ENCODE measurements at regions of chr4 and their contacts with region 1.

Region 1: DNA sequence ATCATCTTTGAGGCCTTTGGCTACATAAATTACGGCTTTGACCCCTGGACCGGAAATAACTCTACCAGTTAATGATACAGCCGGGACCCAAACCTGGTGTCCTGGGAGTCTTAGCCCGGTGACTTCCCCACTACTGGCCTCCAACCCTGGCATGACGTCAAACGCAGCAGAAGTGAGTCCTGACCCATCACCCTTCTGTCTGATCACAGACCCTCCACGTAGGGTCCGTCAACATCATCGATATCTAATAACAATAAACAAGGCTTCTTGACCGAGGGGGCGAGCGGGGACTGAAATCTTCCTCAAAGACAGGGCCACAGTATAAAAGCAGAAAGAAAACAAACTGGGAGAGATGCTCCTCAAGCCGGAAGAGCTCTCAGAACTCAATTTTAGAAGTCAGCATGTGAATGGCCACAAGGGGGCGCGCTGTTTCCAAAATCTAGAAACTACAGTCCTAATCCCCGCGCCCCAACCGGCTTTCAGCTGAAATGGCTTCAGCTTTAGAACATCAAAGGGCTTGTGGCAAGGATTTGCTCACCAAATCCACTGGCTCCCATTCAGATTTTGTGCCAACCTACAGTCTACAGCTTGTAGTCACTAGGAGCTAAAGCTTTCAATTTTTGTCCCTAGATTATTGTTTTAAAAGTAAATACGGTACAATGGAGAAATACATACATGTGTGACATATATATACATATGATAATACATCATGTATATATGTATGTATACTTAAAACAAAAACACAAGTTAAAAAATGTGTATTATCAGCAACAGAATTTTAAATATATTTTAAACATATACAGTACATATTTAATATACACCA is 46.4 kb upstream of the ENPP6 start:
- DNase-seq: peak; percentile 86
- H3K4me3 Mint-ChIP-seq: peak overlapping the region; percentile 1
- H3K27ac Mint-ChIP-seq: peak overlapping the region; percentile 60
- H3K4me1 Mint-ChIP-seq: peaks cover 59% of the 10 kb centered on the region
- H3K27me3 Mint-ChIP-seq: peaks cover 2% of the 10 kb centered on the region

Region 2: GRCh38 chr4:183747931-183748670 is 516.0 kb before region 1 on chr4:
- intact Hi-C with region 1: no loop called
- DNase-seq: no peak
- H3K4me3 Mint-ChIP-seq: no peak overlapping the region
- H3K27ac Mint-ChIP-seq: no peak overlapping the region
- H3K4me1 Mint-ChIP-seq: no peaks in the 10 kb centered on the region
- H3K27me3 Mint-ChIP-seq: peaks cover 6% of the 10 kb centered on the region

Region 3: GRCh38 chr4:184142121-184143000 is 121.8 kb before region 1 on chr4:
- intact Hi-C with region 1: no loop called
- DNase-seq: no peak
- H3K4me3 Mint-ChIP-seq: no peak overlapping the region
- H3K27ac Mint-ChIP-seq: no peak overlapping the region
- H3K4me1 Mint-ChIP-seq: no peaks in the 10 kb centered on the region
- H3K27me3 Mint-ChIP-seq: peaks cover 5% of the 10 kb centered on the region

Region 4: GRCh38 chr4:184282251-184282713 is 18.2 kb after region 1 on chr4:
- intact Hi-C with region 1: loop called (anchors 1 kb)
- DNase-seq: peak; percentile 53
- H3K4me3 Mint-ChIP-seq: peak overlapping the region; percentile 50
- H3K27ac Mint-ChIP-seq: peak overlapping the region; percentile 87
- H3K4me1 Mint-ChIP-seq: peaks cover 75% of the 10 kb centered on the region
- H3K27me3 Mint-ChIP-seq: no peaks in the 10 kb centered on the region

Region 5: GRCh38 chr4:184318852-184319251 is 54.7 kb after region 1 on chr4:
- intact Hi-C with region 1: loop called (anchors 1 kb)
- DNase-seq: no peak
- H3K4me3 Mint-ChIP-seq: peak overlapping the region; percentile 23
- H3K27ac Mint-ChIP-seq: peak overlapping the region; percentile 89
- H3K4me1 Mint-ChIP-seq: peaks cover 71% of the 10 kb centered on the region
- H3K27me3 Mint-ChIP-seq: no peaks in the 10 kb centered on the region

Region 6: DNA sequence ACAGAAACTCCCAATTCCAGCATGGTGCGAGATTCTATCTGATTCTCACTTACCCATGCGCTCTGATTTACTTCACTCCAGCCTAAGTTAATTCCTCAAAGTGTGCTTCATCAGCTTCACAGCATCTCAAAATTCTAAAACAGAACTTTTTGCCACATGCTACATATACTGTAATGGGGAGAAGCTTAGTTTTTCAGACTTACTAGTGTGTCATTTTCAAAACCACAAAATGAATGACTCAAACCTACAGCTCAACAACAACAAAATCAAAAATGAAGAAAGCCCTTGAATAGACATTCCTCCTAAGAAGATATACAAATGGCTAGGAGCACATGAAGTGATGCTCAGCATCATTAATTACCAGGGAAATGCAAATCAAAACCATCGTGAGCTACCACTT is 195.3 kb after region 1 on chr4:
- intact Hi-C with region 1: loop called (anchors 1 kb)
- DNase-seq: no peak
- H3K4me3 Mint-ChIP-seq: peak overlapping the region; percentile 35
- H3K27ac Mint-ChIP-seq: peak overlapping the region; percentile 83
- H3K4me1 Mint-ChIP-seq: peaks cover 82% of the 10 kb centered on the region
- H3K27me3 Mint-ChIP-seq: no peaks in the 10 kb centered on the region

Region 7: GRCh38 chr4:184538023-184538599 is 274.0 kb after region 1 on chr4:
- intact Hi-C with region 1: loop called (anchors 1 kb)
- DNase-seq: peak; percentile 55
- H3K4me3 Mint-ChIP-seq: peak overlapping the region; percentile 91
- H3K27ac Mint-ChIP-seq: peak overlapping the region; percentile 94
- H3K4me1 Mint-ChIP-seq: peaks cover 64% of the 10 kb centered on the region
- H3K27me3 Mint-ChIP-seq: no peaks in the 10 kb centered on the region

Region 8: DNA sequence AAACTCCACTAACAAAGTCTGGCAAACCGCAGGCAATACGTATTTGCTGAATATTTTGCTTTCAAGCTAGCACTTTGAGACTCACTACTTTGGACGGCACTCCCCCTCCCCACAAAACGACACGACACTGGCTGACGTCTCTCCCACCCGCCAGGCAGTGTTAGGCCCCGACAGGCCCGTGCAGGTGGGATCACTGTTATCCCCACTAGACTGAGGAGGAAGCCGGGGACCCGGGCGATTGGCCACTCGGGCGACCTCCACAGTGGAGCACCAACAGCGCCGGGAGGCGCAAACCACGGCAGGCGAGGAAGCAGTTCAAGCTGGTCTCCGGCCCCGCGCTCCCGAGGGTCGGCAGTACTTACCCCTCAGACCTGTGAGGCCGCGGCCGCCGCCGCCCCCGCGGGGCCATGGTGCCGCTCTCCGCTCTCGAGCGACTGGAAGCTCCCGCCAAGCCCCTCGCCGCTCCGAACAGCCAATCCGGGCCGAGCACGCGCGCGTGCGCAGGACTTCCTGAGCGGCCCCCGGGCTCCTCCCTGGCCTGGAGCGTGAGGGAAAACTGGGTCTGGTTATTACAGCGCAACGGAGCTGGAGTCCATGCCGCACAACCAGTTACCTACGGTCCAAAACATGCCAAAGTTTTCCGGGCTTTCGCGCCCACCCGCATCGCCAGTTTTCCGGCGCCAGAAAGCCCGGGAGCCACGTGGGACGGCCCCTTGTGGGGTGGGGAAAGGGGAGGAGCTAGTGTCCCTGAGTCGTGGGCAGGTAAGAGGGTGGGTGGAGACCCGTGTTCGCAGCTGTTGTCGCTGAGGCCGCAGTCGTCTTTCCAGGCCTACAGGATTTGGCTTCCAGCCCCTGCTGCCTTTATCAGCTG is 469.8 kb after region 1 on chr4 and contains the start of gene CENPU:
- intact Hi-C with region 1: loop called (anchors 1 kb)
- DNase-seq: peak; percentile 96
- H3K4me3 Mint-ChIP-seq: peak within 1 kb of the TSS; percentile 94
- H3K27ac Mint-ChIP-seq: peak within 1 kb of the TSS; percentile 95
- H3K4me1 Mint-ChIP-seq: peaks cover 50% of the 10 kb centered on the region
- H3K27me3 Mint-ChIP-seq: no peaks in the 10 kb centered on the region
- total RNA-seq, gene CENPU: 78.3 and 80.3 TPM in 2 replicates

Region 9: DNA sequence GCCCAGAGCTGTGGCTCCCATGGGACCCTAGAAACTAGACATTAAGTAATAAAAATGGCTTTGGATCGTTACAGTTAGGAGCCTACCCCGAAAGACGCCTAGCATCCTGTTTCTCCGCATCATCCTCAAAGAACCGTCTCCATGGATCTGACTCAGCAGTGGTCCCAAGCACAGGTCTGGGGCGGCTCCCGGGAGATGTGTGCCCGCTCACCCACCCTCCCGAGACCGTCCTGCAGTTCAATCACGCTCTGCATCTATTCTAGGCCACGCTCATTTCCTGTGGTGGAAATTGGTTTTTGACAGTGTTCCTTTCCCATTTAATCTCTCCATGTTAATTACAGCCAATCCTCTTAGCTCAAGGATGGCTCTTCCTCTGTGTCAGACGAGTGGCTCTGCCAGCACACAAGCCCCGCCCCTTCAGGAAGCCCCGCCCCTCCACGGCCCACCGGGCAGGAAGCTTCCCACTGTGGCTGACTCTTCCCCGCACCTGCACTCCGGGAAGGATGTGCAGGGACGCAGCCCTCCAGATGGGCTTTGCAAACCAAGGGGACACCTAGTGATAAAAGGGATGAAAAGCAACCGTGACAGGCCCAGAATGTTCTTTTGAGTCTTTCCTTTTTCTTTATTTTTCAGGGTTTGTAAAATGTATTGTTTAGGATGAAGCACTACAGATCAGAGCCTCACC is 719.7 kb after region 1 on chr4:
- intact Hi-C with region 1: loop called (anchors 10 kb)
- DNase-seq: peak; percentile 39
- H3K4me3 Mint-ChIP-seq: no peak overlapping the region
- H3K27ac Mint-ChIP-seq: no peak overlapping the region
- H3K4me1 Mint-ChIP-seq: no peaks in the 10 kb centered on the region
- H3K27me3 Mint-ChIP-seq: peaks cover 11% of the 10 kb centered on the region